K562 (cell line): ENCODE measurements at regions of chr3 and their contacts with region 1.

Region 1: DNA sequence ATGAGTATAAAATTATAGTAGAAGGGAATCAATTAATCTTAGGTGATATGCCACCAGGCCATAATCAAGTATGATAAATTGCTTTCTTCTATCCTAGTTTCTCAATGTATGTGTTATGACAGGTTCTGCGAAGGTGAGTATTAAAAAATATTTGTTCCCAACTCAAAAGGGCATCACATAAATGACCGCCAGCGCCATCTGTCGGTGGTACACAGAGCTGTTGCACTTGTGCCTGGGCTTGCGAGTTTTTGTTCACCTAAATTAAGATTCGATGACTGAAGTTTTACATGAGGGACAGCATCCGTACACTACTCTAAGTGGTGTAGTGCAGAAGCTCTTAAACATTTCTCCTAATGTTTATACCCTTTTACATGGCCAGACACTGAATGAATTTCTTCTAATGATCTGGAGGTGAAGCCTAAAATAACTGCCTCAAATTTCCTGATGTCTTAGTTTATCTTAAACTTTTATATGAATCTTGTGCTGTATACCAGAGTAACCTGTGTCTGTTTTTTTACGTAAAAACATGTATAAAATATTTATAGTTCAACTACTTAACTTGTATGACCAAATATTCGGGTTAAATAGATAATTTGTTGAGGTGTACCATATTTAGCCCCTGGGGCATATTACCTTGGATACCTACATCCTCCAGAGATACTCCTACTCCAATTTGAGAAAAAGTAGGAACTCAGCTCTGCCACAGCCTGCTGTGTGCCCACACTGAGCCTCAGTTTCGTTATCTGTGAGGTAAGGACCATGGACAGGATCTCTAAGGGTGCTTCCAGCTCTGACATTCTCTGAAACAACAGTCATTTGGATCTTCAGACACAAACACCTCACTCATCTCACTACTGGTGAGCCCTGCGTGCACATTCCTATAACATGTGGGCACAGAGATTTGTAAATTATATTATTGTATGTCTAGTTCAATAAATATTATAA is 365.6 kb downstream of the MAGI1 start:
- DNase-seq: peak; percentile 39 to 85 (median 51)
- ATAC-seq: peak; percentile 82
- H3K4me3 ChIP-seq: no peak overlapping the region
- H3K27ac ChIP-seq: no peak overlapping the region
- H3K4me1 ChIP-seq: peaks cover 0 to 2% of the 10 kb centered on the region in 2 experiments; a peak in 2 of 5 replicates
- H3K27me3 ChIP-seq: no peaks in the 10 kb centered on the region
- CTCF ChIP-seq: peak; percentile 71 to 81 (median 78)
- EP300 ChIP-seq: no peak
- POLR2A ChIP-seq: no peak
- RAD21 ChIP-seq: peak; percentile 73 to 84

Region 2: GRCh38 chr3:65342084-65342683 is 331.0 kb before region 1 on chr3:
- CTCF ChIA-PET with region 1: no interaction called
- POLR2A ChIA-PET with region 1: no interaction called
- in situ Hi-C with region 1: no loop called
- intact Hi-C with region 1: loop called (anchors 10 kb)
- DNase-seq: peak; percentile 61 to 75 (median 62)
- ATAC-seq: peak; percentile 99
- H3K4me3 ChIP-seq: no peak overlapping the region
- H3K27ac ChIP-seq: no peak overlapping the region
- H3K4me1 ChIP-seq: peaks cover 0 to 6% of the 10 kb centered on the region in 2 experiments; a peak in 3 of 5 replicates
- H3K27me3 ChIP-seq: no peaks in the 10 kb centered on the region; a peak in 2 of 5 replicates
- CTCF ChIP-seq: peak; percentile 72 to 81 (median 72)
- EP300 ChIP-seq: no peak
- POLR2A ChIP-seq: no peak
- RAD21 ChIP-seq: peak; percentile 27 to 69

Region 3: GRCh38 chr3:65439641-65440284 is 233.4 kb before region 1 on chr3:
- CTCF ChIA-PET with region 1: interaction called, 9 read pairs
- POLR2A ChIA-PET with region 1: no interaction called
- in situ Hi-C with region 1: no loop called
- intact Hi-C with region 1: loop called (anchors 1 kb)
- DNase-seq: peak; percentile 27 to 69 (median 52)
- ATAC-seq: peak; percentile 97
- H3K4me3 ChIP-seq: no peak overlapping the region
- H3K27ac ChIP-seq: no peak overlapping the region
- H3K4me1 ChIP-seq: no peaks in the 10 kb centered on the region
- H3K27me3 ChIP-seq: no peaks in the 10 kb centered on the region
- CTCF ChIP-seq: peak; percentile 58 to 66 (median 64)
- EP300 ChIP-seq: no peak
- POLR2A ChIP-seq: no peak
- RAD21 ChIP-seq: peak; percentile 68 to 83

Region 4: GRCh38 chr3:65569845-65570405 is 103.2 kb before region 1 on chr3:
- CTCF ChIA-PET with region 1: no interaction called
- POLR2A ChIA-PET with region 1: no interaction called
- in situ Hi-C with region 1: no loop called
- intact Hi-C with region 1: loop called (anchors 10 kb)
- DNase-seq: peak in 1 of 4 experiments; percentile 15
- ATAC-seq: 0 out of 3 replicates have a peak, but pooled peaks have one; percentile 32
- H3K4me3 ChIP-seq: no peak overlapping the region
- H3K27ac ChIP-seq: no peak overlapping the region
- H3K4me1 ChIP-seq: peaks cover 0 to 24% of the 10 kb centered on the region in 2 experiments; a peak in 3 of 5 replicates
- H3K27me3 ChIP-seq: no peaks in the 10 kb centered on the region
- CTCF ChIP-seq: peak in 2 of 3 experiments; percentile 24 to 30; a peak in 2 of 6 replicates
- EP300 ChIP-seq: no peak
- POLR2A ChIP-seq: no peak
- RAD21 ChIP-seq: 0 out of 4 replicates have a peak, but pooled peaks of 1 of the 2 experiments have one; percentile 7

Region 5: GRCh38 chr3:65597226-65597951 is 75.8 kb before region 1 on chr3:
- CTCF ChIA-PET with region 1: no interaction called
- POLR2A ChIA-PET with region 1: no interaction called
- in situ Hi-C with region 1: no loop called
- intact Hi-C with region 1: loop called (anchors 2 kb)
- DNase-seq: no peak
- ATAC-seq: peak; percentile 9; the same call in 2 of the 3 replicates
- H3K4me3 ChIP-seq: peak overlapping the region; percentile 45
- H3K27ac ChIP-seq: no peak overlapping the region
- H3K4me1 ChIP-seq: peaks cover 11 to 31% of the 10 kb centered on the region in 2 experiments; a peak in 4 of 5 replicates
- H3K27me3 ChIP-seq: no peaks in the 10 kb centered on the region
- CTCF ChIP-seq: no peak
- EP300 ChIP-seq: no peak
- POLR2A ChIP-seq: no peak
- RAD21 ChIP-seq: no peak

Region 6: GRCh38 chr3:65732051-65732935 is 59.1 kb after region 1 on chr3:
- CTCF ChIA-PET with region 1: no interaction called
- POLR2A ChIA-PET with region 1: no interaction called
- in situ Hi-C with region 1: no loop called
- intact Hi-C with region 1: loop called (anchors 5 kb)
- DNase-seq: peak; percentile 39 to 65 (median 46)
- ATAC-seq: peak; percentile 88
- H3K4me3 ChIP-seq: no peak overlapping the region
- H3K27ac ChIP-seq: no peak overlapping the region
- H3K4me1 ChIP-seq: no peaks in the 10 kb centered on the region; a peak in 2 of 5 replicates
- H3K27me3 ChIP-seq: no peaks in the 10 kb centered on the region
- CTCF ChIP-seq: peak; percentile 63 to 71 (median 70)
- EP300 ChIP-seq: no peak
- POLR2A ChIP-seq: no peak
- RAD21 ChIP-seq: peak; percentile 51 to 74

Region 7: DNA sequence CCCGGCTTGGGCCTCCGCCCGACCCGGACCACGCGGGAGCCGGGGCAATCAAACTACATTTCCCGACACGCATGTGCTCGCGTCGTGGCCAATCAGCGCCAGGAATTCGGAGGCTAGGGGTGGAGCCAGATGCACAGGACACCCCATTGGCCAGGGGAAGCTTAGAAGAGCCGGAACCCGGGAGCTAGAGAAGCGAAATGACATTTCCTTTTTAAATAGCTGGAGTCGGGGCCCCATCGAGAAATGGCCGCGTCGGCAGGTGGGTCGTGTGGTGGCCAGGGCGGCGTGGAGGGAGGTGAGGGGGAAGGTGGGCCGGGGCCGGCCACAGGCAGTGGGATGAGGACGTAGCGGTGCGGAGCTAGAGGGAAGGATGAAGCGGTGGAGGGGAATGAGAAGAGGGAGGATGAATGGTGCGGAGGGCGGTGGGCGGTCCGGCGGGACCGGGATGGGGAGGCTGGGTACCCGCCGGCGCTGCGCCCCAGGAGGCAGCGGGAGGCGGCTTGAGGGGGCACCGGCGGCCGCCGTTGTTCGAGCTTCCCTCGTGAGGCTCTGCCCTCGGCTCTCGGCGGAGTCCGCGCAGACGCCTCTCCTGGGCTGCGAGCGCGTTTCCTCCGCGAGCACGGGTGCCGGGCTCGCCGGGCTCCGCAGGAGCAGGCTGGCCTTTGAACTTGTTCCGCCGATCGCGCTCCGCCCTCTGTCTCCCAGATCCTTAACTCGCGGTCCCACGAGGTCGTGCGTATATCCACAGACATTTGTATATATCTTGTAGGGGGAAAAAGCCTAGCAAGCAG is 1325.2 kb after region 1 on chr3 and contains the start of gene KBTBD8:
- CTCF ChIA-PET with region 1: no interaction called
- POLR2A ChIA-PET with region 1: no interaction called
- in situ Hi-C with region 1: loop called (anchors 25 kb)
- intact Hi-C with region 1: no loop called
- DNase-seq: peak in 3 of 4 experiments; percentile 97 to 98 (median 97)
- ATAC-seq: peak; percentile 98
- H3K4me3 ChIP-seq: peak within 1 kb of the TSS; percentile 76
- H3K27ac ChIP-seq: peak within 1 kb of the TSS; percentile 79
- H3K4me1 ChIP-seq: peaks cover 4 to 8% of the 10 kb centered on the region in 2 experiments; a peak in 3 of 5 replicates
- H3K27me3 ChIP-seq: no peaks in the 10 kb centered on the region
- CTCF ChIP-seq: no peak
- EP300 ChIP-seq: no peak
- POLR2A ChIP-seq: peak; percentile 76
- RAD21 ChIP-seq: no peak
- polyA plus RNA-seq, gene KBTBD8: 2.8 to 3.7 TPM